ENCODE measurements at regions of chr17 and their contacts with region 1.

Region 1: GRCh38 chr17:81636505-81637288 is at the starts of genes NPLOC4 and TSPAN10:
- DNase-seq: peak; percentile 80
- H3K4me3 ChIP-seq: peak within 1 kb of the TSS; percentile 70 to 91 (median 84)
- H3K27ac ChIP-seq: peak within 1 kb of the TSS; percentile 75
- H3K4me1 ChIP-seq: peaks cover 11% of the 10 kb centered on the region
- H3K27me3 ChIP-seq: no peaks in the 10 kb centered on the region
- CTCF ChIP-seq: no peak
- POLR2A ChIP-seq: peak; percentile 81
- total RNA-seq, gene NPLOC4: 150 and 160 TPM in 2 replicates
- total RNA-seq, gene TSPAN10: 0.44 and 0.91 TPM in 2 replicates

Region 2: GRCh38 chr17:81666342-81667191 is 29.9 kb after region 1 on chr17 and contains the starts of genes CCDC137 and OXLD1:
- CTCF ChIA-PET with region 1: interaction called, 3 read pairs
- POLR2A ChIA-PET with region 1: interaction called, 5 read pairs
- dilution Hi-C with region 1: no loop called
- intact Hi-C with region 1: loop called (anchors 2 kb)
- DNase-seq: peak; percentile 95
- H3K4me3 ChIP-seq: peak within 1 kb of the TSS; percentile 34 to 76 (median 64)
- H3K27ac ChIP-seq: peak within 1 kb of the TSS; percentile 36
- H3K4me1 ChIP-seq: peaks cover 18% of the 10 kb centered on the region
- H3K27me3 ChIP-seq: no peaks in the 10 kb centered on the region
- CTCF ChIP-seq: no peak
- POLR2A ChIP-seq: peak; percentile 90
- total RNA-seq, gene CCDC137: 32.2 and 32.7 TPM in 2 replicates
- total RNA-seq, gene OXLD1: 18.5 and 20.1 TPM in 2 replicates

Measured in endothelial cell of umbilical vein (primary cell).